Psoas muscle (tissue), 8 donors: ENCODE measurements at regions of chr11 and their contacts with region 1.

Region 1: DNA sequence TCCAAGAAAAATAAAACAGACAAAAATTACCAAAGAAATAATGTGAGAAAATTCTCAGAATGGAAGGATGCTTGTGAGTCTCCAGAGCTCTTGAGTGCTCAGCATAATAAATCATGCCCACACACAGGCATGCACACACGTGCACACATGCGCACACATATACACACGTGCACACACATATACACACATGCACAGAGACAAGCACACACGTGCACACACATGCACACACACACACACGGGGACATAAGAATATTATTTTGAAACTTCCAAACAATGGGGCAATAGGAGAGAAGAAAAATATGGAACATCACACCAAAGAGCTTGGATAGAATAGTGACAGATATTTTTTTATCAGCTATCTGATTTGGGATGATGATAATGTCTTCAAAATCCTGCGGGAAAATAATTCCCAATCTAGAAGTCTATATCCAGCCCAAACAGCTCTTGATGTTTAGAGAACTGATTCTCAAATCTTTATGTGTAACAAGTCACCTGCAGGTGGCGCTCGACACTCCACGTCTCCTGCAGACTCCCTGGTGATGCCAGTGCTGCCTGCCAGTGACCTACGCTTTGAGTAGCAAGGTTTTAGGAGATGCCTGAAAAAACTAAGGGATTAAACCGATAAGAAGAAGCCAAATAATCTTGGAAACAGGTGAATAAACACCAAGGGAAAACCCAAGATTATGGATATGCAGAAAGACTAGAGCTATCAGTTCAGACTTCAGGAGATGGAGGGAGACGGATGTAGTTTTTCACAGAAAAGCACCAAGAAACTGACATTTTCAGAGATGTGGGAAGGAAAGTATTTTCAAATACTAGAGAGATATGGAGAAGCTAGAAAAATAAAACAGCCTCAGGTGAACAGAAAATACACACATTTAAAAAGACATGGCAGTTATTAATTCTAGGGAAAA is 743.6 kb downstream of the ETS1 start:
- DNase-seq: peak; percentile 51 to 73
- ATAC-seq: no peak
- H3K4me3 ChIP-seq: no peak overlapping the region
- H3K27ac ChIP-seq: no peak overlapping the region
- H3K4me1 ChIP-seq: no peaks in the 10 kb centered on the region
- H3K27me3 ChIP-seq: no peaks in the 10 kb centered on the region
- CTCF ChIP-seq: peak; percentile 45

Region 2: GRCh38 chr11:128021349-128022006 is 177.7 kb after region 1 on chr11:
- intact Hi-C with region 1: loop called in 1 of 2 experiments (anchors 5 kb)
- DNase-seq: no peak
- ATAC-seq: no peak
- H3K4me3 ChIP-seq: no peak overlapping the region
- H3K27ac ChIP-seq: no peak overlapping the region
- H3K4me1 ChIP-seq: no peaks in the 10 kb centered on the region
- H3K27me3 ChIP-seq: no peaks in the 10 kb centered on the region
- CTCF ChIP-seq: peak; percentile 14

Region 3: GRCh38 chr11:128302425-128303186 is 458.9 kb after region 1 on chr11:
- intact Hi-C with region 1: no loop called
- DNase-seq: no peak
- ATAC-seq: no peak
- H3K4me3 ChIP-seq: no peak overlapping the region
- H3K27ac ChIP-seq: no peak overlapping the region
- H3K4me1 ChIP-seq: no peaks in the 10 kb centered on the region
- H3K27me3 ChIP-seq: no peaks in the 10 kb centered on the region
- CTCF ChIP-seq: no peak